ENCODE measurements at regions of chr16 and their contacts with region 1.

Region 1: GRCh38 chr16:5502467-5502869 is 404.9 kb upstream of the EEF2KMT start:
- DNase-seq: peak; percentile 76
- H3K4me3 ChIP-seq: no peak overlapping the region
- H3K27ac ChIP-seq: peak overlapping the region in 1 of 2 experiments; percentile 100; a peak in 2 of 4 replicates
- H3K4me1 ChIP-seq: peaks cover 0 to 62% of the 10 kb centered on the region in 2 experiments; a peak in 2 of 4 replicates
- H3K27me3 ChIP-seq: no peaks in the 10 kb centered on the region
- CTCF ChIP-seq: 0 out of 2 replicates have a peak, but pooled peaks have one; percentile 8
- EP300 ChIP-seq: peak in 1 of 2 experiments; percentile 100; a peak in 2 of 4 replicates
- RAD21 ChIP-seq: peak; percentile 95

Region 2: DNA sequence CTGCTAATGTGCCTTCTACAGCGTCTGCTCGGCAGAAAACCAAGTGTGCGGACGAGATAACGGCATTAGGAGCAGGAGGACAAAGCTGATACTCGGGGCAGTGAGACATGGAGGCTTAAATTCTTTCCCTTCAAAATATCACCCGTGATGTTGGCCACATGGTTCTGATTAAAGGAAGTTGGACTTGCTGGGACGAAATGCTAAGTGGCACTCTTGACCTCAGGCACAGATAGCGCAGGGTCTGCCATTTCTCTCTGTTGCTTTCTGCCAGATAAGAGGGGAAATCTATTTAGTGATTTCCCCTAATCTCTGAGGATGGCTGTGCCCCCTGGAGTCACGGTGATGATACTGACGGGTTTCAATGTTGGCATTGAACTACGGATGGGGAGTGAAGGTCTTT is 104.7 kb after region 1 on chr16:
- CTCF ChIA-PET with region 1: interaction called, 73 read pairs
- POLR2A ChIA-PET with region 1: interaction called, 37 read pairs
- DNase-seq: peak; percentile 68
- H3K4me3 ChIP-seq: no peak overlapping the region
- H3K27ac ChIP-seq: peak overlapping the region in 1 of 2 experiments; percentile 99; a peak in 3 of 4 replicates
- H3K4me1 ChIP-seq: peaks cover 0 to 56% of the 10 kb centered on the region in 2 experiments; a peak in 2 of 4 replicates
- H3K27me3 ChIP-seq: no peaks in the 10 kb centered on the region
- CTCF ChIP-seq: no peak
- EP300 ChIP-seq: peak in 1 of 2 experiments; percentile 98; a peak in 2 of 4 replicates
- RAD21 ChIP-seq: peak; percentile 54

Region 3: GRCh38 chr16:5621826-5622225 is 119.4 kb after region 1 on chr16:
- CTCF ChIA-PET with region 1: interaction called, 138 read pairs
- POLR2A ChIA-PET with region 1: interaction called, 57 read pairs
- DNase-seq: peak; percentile 52
- H3K4me3 ChIP-seq: no peak overlapping the region
- H3K27ac ChIP-seq: peak overlapping the region in 1 of 2 experiments; percentile 94; a peak in 2 of 4 replicates
- H3K4me1 ChIP-seq: peaks cover 0 to 63% of the 10 kb centered on the region in 2 experiments; a peak in 2 of 4 replicates
- H3K27me3 ChIP-seq: no peaks in the 10 kb centered on the region
- CTCF ChIP-seq: no peak
- EP300 ChIP-seq: peak in 1 of 2 experiments; percentile 82; a peak in 2 of 4 replicates
- RAD21 ChIP-seq: no peak

Region 4: GRCh38 chr16:5709889-5710288 is 207.4 kb after region 1 on chr16:
- CTCF ChIA-PET with region 1: no interaction called
- POLR2A ChIA-PET with region 1: no interaction called
- DNase-seq: no peak
- H3K4me3 ChIP-seq: no peak overlapping the region
- H3K27ac ChIP-seq: no peak overlapping the region
- H3K4me1 ChIP-seq: no peaks in the 10 kb centered on the region; a peak in 1 of 4 replicates
- H3K27me3 ChIP-seq: no peaks in the 10 kb centered on the region
- CTCF ChIP-seq: no peak
- EP300 ChIP-seq: no peak
- RAD21 ChIP-seq: no peak